H1 (cell line): ENCODE measurements at regions of chr15 and their contacts with region 1.

Region 1: DNA sequence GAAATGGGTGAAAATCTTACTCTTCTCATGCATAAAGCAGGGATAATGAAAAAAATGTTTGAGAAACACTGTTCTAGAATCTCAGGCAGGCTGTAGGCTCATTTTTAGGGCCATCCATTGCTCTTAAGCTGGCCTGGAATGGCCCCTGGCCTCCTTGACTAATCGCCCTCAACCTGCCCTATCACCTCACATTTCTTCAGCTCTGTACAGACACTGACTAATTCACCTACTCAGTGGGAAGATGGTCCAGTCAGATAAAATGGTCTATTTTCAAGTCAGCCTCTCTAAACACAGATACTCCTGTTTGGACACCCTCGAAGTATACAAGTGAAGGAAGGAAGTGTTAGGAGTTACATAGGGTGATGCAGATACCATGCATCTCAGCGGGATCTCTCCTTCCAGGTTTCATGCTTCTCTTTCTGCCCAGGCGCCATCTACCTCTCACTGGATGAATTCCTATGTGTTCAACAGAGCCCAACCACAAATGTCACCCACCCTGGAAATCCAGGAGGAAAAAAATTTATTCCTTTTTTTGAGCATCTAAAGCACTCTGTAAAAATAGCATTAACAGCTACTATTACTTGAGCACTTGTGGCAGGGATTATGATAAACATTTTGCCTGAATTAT is 12.1 kb downstream of the FMN1 start:
- DNase-seq: no peak
- H3K4me3 ChIP-seq: no peak overlapping the region
- H3K27ac ChIP-seq: no peak overlapping the region
- H3K4me1 ChIP-seq: peaks cover 0 to 7% (median 1%) of the 10 kb centered on the region in 4 experiments; a peak in 2 of 7 replicates
- H3K27me3 ChIP-seq: no peaks in the 10 kb centered on the region
- CTCF ChIP-seq: peak in 2 of 3 experiments; percentile 4 to 30; a peak in 2 of 4 replicates
- EP300 ChIP-seq: no peak
- POLR2A ChIP-seq: no peak
- RAD21 ChIP-seq: peak; percentile 28 to 31; a peak in 3 of 4 replicates

Region 2: DNA sequence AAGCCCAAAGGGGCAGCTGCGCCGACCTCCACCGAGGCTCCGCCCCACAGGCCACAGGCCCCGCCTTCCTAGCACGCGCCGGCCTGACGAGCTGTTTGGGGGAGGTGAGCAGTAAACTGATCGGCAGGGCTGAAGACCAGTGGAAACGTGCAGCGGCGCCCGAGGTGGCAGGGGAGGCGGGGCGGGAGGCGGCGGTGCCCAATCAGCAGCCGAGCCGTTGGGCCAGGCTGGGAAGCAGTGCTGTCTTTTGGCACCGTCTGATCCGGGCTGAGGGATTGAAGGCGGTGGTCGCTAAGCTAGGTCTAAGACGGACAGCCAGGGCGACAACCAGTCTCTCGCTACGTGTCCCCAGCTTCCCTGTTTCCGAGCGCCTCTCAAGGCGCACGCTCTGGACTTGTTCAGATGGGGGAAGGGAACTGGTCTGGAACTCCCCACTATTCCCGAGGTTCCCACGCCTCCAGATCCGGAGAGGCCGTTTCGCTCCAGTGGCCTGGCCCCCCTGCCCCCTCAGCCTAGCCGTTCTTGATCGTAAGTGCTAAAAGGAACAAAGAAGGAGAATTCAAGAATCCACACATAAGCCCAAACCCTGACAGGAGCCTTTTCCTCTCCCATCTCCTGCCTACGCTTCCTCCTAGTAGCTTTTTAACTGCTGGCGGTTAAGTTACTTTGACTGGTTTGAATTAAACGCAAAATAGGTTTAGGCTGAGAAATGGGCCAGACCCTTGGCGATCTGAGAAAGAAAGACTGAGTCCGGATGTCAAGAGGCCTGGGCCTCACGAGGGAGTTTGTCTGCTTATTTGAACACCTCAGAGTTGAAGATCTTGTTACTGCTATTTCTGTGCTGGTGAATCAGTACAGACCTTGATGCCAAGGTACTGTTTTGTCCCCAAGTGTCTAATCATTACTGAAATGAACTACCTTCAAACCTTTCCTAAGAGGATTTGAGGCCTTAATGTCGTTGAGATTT is 12.6 kb after region 1 on chr15 and contains the start of gene FMN1:
- CTCF ChIA-PET with region 1: interaction called, 21 read pairs
- POLR2A ChIA-PET with region 1: interaction called, 3 read pairs
- DNase-seq: peak; percentile 92 to 96
- H3K4me3 ChIP-seq: peak within 1 kb of the TSS; percentile 51 to 71 (median 59)
- H3K27ac ChIP-seq: no peak within 1 kb of the TSS
- H3K4me1 ChIP-seq: peaks cover 0 to 9% (median 4%) of the 10 kb centered on the region in 4 experiments; a peak in 2 of 7 replicates
- H3K27me3 ChIP-seq: no peaks in the 10 kb centered on the region; a peak in 1 of 7 replicates
- CTCF ChIP-seq: no peak
- EP300 ChIP-seq: no peak
- POLR2A ChIP-seq: no peak
- RAD21 ChIP-seq: no peak
- total RNA-seq, gene FMN1: 2.9 and 3.7 TPM in 2 replicates